Tibial artery (tissue), 4 donors: ENCODE measurements at regions of chr20 and their contacts with region 1.

Region 1: DNA sequence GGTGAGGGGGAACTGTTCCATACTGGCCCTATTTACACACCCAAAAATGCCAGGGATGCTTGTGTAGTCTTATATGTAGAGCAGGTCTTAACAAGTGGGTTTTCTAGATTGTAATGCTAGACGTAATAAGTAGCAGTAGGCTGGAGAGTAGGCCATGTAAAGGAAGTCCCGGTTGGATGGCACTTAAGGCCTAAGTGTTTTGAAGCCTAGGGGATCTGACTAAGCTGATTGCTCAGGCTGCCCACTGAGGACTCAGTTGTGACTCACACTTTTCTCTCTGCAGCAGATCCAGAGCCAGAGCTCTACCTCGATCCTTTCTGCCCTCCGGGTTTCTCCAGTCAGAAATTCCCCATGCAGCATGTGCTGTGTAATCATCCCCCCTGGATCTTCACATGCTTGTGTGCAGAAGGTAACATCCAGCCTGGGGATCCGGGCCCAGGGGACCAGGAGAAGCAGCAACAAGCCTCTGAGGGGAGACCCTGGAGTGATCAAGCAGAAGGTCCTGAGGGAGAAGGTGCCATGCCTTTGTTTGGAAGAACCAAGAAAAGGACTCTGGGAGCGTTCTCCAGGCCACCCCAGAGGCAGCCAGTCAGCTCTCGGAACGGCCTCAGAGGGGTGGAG is 26.6 kb downstream of the ZNF133 start:
- DNase-seq: no peak
- H3K4me3 ChIP-seq: no peak overlapping the region
- H3K27ac ChIP-seq: no peak overlapping the region
- H3K4me1 ChIP-seq: no peaks in the 10 kb centered on the region
- H3K27me3 ChIP-seq: no peaks in the 10 kb centered on the region
- CTCF ChIP-seq: no peak

Region 2: GRCh38 chr20:18258126-18258860 is 56.6 kb before region 1 on chr20:
- intact Hi-C with region 1: loop called (anchors 10 kb)
- DNase-seq: no peak
- H3K4me3 ChIP-seq: no peak overlapping the region
- H3K27ac ChIP-seq: no peak overlapping the region
- H3K4me1 ChIP-seq: no peaks in the 10 kb centered on the region
- H3K27me3 ChIP-seq: no peaks in the 10 kb centered on the region
- CTCF ChIP-seq: no peak

Region 3: DNA sequence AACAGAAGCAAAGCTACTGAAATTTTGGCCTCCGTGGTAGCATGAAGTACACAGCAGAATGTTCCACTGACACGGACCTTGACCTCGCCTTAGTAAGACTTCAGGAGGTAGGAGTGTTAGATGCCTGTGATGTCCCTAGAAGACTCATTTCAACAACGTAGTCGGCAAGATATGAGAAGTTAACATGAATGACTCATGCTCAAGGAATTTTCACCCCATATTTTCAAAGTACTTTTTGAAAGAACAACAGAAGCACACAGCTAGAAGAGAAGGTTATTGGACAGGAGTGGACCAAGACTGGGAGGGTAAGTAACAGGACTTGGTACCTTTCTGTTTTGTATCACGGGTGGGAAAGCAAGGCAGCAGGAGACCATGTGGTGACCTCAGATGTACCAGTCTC is 74.0 kb after region 1 on chr20:
- intact Hi-C with region 1: no loop called
- DNase-seq: no peak
- H3K4me3 ChIP-seq: no peak overlapping the region
- H3K27ac ChIP-seq: no peak overlapping the region
- H3K4me1 ChIP-seq: no peaks in the 10 kb centered on the region
- H3K27me3 ChIP-seq: no peaks in the 10 kb centered on the region
- CTCF ChIP-seq: no peak

Region 4: GRCh38 chr20:18428490-18429173 is 113.7 kb after region 1 on chr20:
- intact Hi-C with region 1: no loop called
- DNase-seq: no peak
- H3K4me3 ChIP-seq: no peak overlapping the region
- H3K27ac ChIP-seq: no peak overlapping the region
- H3K4me1 ChIP-seq: peaks cover 0 to 11% (median 8%) of the 10 kb centered on the region in 4 donors
- H3K27me3 ChIP-seq: no peaks in the 10 kb centered on the region
- CTCF ChIP-seq: no peak